ENCODE measurements at regions of chr10 and their contacts with region 1.

Region 1: DNA sequence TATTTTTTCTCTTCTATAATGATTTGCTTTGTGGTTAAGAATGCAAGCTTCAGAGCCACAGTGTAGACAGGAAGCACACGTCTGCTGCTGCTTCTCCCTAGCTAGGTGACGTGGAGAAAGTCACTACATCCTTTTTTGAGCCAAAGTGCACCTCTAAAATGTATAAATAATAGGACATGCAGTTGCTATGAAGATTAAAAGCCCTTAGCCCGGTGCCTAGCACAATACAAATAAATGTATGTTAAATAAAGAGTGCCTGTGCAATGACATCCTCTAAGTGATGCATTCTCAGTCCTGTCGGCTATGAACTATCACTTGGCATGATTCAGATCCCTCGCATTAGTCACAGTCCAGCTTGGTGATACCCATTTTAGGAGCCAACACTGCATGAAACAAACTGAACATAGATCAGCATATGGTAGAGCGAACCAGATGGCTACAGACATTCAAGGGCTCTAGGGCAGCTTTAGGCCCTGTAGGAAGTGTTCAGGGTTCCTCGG is 4.8 kb upstream of the TRDMT1 start:
- DNase-seq: peak in 12 of 14 experiments; percentile 15 to 90 (median 34)
- ATAC-seq: peak; percentile 75
- H3K4me3 ChIP-seq: no peak overlapping the region
- H3K4me3 Mint-ChIP-seq: peak overlapping the region; percentile 47
- H3K27ac ChIP-seq: peak overlapping the region; percentile 72 to 84
- H3K27ac Mint-ChIP-seq: peak overlapping the region; percentile 96
- H3K4me1 ChIP-seq: peaks cover 23% of the 10 kb centered on the region
- H3K4me1 Mint-ChIP-seq: peaks cover 41% of the 10 kb centered on the region
- H3K27me3 ChIP-seq: no peaks in the 10 kb centered on the region
- H3K27me3 Mint-ChIP-seq: no peaks in the 10 kb centered on the region
- CTCF ChIP-seq: no peak

Region 2: GRCh38 chr10:16891375-16892313 is 314.6 kb before region 1 on chr10:
- CTCF ChIA-PET with region 1: no interaction called
- POLR2A ChIA-PET with region 1: no interaction called
- intact Hi-C with region 1: no loop called
- DNase-seq: peak in 11 of 14 experiments; percentile 9 to 71 (median 19)
- ATAC-seq: peak; percentile 58
- H3K4me3 ChIP-seq: peak overlapping the region; percentile 15
- H3K4me3 Mint-ChIP-seq: peak overlapping the region; percentile 47
- H3K27ac ChIP-seq: no peak overlapping the region
- H3K27ac Mint-ChIP-seq: peak overlapping the region; percentile 22
- H3K4me1 ChIP-seq: peaks cover 3% of the 10 kb centered on the region
- H3K4me1 Mint-ChIP-seq: peaks cover 10% of the 10 kb centered on the region
- H3K27me3 ChIP-seq: no peaks in the 10 kb centered on the region
- H3K27me3 Mint-ChIP-seq: no peaks in the 10 kb centered on the region
- CTCF ChIP-seq: peak; percentile 17

Region 3: DNA sequence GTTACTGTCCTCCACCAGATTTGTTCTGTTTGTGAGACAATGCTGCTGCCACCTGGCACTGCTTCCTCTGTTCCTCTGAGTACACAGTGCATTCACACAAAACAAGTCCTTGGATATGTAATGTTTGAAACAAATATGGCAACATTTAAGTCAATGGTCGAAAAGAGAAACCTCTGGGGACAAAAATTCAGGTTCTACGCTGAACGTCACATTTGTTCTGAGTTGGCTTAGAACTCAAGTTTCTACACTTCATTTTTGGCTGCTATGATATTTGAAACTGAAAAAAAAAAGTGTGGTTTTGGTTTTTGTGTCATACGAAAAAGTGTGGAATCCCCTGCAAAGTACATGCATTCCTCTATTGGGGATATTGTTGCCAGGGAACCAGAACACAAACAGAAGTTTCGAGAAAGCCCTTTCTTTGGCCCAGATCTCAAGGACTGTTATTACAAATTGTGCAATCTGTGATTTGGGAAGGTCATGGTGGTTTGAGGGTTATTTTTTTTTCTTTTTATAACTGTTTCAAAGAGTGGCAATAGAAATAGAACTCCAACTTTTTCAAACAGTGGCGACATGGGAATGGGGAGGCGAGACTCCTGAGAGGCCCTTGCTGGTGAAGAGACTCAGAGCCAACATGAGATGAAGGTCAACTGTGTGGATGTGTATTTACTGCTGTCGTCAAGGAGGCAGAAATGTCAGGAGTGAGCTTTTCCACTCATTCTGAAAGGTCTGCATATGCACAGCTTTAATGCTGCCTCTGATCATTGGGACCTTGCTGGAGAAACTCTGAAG is 204.1 kb before region 1 on chr10:
- CTCF ChIA-PET with region 1: interaction called, 3 read pairs
- POLR2A ChIA-PET with region 1: no interaction called
- intact Hi-C with region 1: loop called in 1 of 2 experiments (anchors 5 kb)
- DNase-seq: peak in 4 of 14 experiments; percentile 38 to 92 (median 70)
- ATAC-seq: peak; percentile 40
- H3K4me3 ChIP-seq: no peak overlapping the region
- H3K4me3 Mint-ChIP-seq: peak overlapping the region; percentile 59
- H3K27ac ChIP-seq: peak overlapping the region; percentile 21 to 58
- H3K27ac Mint-ChIP-seq: peak overlapping the region; percentile 95
- H3K4me1 ChIP-seq: peaks cover 28% of the 10 kb centered on the region
- H3K4me1 Mint-ChIP-seq: peaks cover 66% of the 10 kb centered on the region
- H3K27me3 ChIP-seq: no peaks in the 10 kb centered on the region
- H3K27me3 Mint-ChIP-seq: no peaks in the 10 kb centered on the region
- CTCF ChIP-seq: no peak

Measured in CD4-positive, alpha-beta T cell (primary cell).